Common myeloid progenitor, CD34-positive (primary cell): ENCODE measurements at regions of chr2 and their contacts with region 1.

Region 1: DNA sequence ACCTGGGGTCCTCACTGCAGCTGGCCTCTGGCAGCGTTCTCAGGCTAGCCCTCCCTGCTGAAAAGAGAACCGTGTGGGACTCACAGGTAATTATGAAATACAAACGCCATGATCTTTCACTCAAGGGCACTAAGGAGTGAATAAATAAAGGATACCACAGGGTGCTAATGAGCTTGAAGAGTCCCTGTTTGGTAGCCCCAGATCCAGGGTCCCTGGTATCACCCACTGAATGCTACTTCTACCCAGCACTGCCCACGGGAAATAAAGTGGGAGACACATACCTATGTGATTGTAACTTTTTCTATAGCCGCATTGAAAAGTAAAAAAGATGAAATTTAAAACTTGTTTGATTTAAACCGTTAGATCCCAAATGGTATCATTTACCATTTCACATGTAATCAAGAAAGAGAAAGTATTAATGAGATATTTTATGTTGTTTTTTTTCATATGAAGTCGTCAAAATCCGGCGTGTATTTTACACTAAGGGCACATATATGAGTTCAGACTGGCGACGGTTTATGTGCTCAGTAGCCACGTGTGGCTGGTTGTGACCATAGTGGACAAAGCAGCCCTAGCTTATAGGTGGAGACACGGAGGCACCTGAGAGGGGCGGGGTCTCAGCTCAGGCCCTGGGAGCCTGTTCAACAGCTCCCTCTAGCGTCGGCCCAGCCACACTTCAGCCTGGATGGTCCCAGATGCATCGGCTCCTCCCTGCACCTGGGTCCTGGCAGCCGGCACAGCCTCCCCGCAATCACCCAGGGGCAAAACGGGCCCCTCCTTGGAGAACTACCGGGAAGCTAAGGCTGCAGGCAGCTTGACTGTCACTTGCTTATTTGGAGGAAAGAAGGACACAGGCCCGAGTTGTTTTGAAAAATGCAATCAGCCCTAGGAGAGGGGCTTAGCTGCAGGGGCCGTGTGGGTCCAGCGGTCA is 39.2 kb downstream of the ODC1 start:
- DNase-seq: peak; percentile 80 to 82 (median 81)
- H3K4me3 ChIP-seq: peak overlapping the region in 5 of 7 experiments; percentile 12 to 61 (median 30)
- H3K27ac ChIP-seq: peak overlapping the region in 1 of 2 experiments; percentile 47
- H3K4me1 ChIP-seq: peaks cover 14 to 63% (median 55%) of the 10 kb centered on the region in 4 experiments
- H3K27me3 ChIP-seq: no peaks in the 10 kb centered on the region

Region 2: GRCh38 chr2:10267551-10268465 is 141.1 kb before region 1 on chr2:
- CTCF ChIA-PET with region 1: interaction called, 46 read pairs
- POLR2A ChIA-PET with region 1: interaction called, 3 read pairs
- DNase-seq: no peak
- H3K4me3 ChIP-seq: no peak overlapping the region
- H3K27ac ChIP-seq: no peak overlapping the region
- H3K4me1 ChIP-seq: peaks cover 0 to 10% (median 8%) of the 10 kb centered on the region in 4 experiments
- H3K27me3 ChIP-seq: no peaks in the 10 kb centered on the region

Region 3: DNA sequence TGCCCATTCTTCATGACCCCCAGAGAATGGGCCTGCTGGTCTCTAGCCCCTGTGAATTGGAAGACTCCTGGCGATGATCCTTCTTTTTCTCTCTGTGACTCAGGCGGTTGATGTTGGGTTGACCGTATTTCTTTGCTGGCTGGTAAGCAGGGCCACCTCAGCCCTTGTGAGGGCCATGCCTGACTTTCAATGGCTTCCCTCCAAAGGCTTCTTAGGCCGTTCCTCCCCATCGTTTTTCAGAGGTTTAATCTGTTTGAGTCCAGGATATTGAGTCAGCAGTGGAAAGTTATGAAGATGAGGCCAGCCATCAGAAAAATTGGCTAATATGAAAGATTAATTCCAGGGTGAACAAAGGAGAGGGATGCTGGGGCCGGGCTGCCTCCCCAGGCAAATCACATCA is 92.6 kb before region 1 on chr2:
- CTCF ChIA-PET with region 1: interaction called, 23 read pairs
- POLR2A ChIA-PET with region 1: no interaction called
- DNase-seq: no peak
- H3K4me3 ChIP-seq: no peak overlapping the region
- H3K27ac ChIP-seq: no peak overlapping the region
- H3K4me1 ChIP-seq: no peaks in the 10 kb centered on the region
- H3K27me3 ChIP-seq: no peaks in the 10 kb centered on the region

Region 4: DNA sequence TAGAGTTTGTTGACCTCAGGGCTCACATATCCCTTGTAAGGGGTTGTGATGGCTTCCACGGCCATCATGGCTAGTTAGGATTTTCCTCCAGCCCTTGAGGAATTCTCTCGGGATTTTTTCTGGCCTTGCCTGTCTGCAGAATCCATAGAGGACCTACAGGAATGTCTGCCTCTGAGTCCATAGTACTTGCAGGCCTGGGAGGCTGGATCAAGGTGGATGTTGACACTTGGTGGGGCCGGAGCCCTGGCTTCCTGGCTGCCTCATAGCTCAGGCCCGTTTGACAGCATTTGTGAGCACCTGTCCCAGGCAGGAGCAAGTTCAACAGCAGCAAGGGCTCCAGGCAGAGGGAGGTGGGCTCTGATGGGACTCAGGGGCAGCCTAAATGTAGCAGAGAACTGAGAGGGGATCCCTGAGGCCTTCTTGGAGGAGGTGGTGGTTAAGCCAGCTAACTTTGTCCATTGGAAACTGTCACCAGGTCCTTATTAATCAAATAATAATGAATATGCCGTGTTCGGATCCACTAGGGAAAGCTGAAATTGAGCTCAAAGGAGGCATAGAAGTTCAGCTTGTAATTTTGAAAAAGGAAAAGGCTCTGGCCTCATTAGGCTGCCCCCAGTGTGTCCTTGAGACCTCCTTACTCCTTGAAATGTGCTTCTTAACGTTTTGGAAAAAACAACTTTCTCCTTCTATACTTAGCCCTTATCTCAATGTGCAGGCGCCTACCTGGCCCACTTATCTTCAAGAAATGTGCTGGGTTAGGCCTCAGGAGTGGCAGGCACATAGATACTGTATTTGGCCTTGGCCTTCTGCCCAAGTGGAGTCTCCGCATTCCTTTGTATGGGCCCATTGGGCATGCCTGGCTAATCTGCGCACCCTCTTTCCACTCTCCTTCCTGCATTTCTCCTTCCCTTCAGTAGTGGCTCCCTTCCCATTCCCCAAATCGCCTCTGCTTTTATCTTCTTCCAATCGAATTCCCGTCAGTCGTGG is 39.4 kb before region 1 on chr2:
- CTCF ChIA-PET with region 1: interaction called, 14 read pairs
- POLR2A ChIA-PET with region 1: no interaction called
- DNase-seq: peak in 2 of 3 donors; percentile 32 to 50
- H3K4me3 ChIP-seq: no peak overlapping the region
- H3K27ac ChIP-seq: peak overlapping the region in 1 of 2 experiments; percentile 34
- H3K4me1 ChIP-seq: peaks cover 0 to 11% (median 4%) of the 10 kb centered on the region in 4 experiments
- H3K27me3 ChIP-seq: no peaks in the 10 kb centered on the region

Region 5: DNA sequence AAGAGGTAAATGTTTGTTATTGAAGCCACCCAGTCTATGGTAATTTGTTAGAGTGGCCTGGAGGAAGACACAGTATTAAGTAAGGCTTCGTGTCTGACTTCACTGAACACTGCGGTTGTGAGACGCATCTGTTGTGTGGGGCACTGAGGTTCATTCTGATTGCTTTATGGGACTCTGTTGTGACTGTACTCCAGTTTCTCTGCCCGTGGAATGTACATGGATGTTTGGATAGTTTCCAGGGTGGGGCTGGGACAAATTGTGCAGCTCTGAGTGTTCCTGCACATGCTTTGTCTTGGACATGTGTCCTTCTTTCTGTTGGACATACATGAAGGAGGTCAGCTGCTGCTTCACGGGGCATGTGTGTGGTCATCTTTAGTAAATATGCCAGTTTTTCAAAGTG is 19.3 kb before region 1 on chr2:
- CTCF ChIA-PET with region 1: interaction called, 94 read pairs
- POLR2A ChIA-PET with region 1: no interaction called
- DNase-seq: no peak
- H3K4me3 ChIP-seq: no peak overlapping the region
- H3K27ac ChIP-seq: no peak overlapping the region
- H3K4me1 ChIP-seq: peaks cover 2 to 65% (median 54%) of the 10 kb centered on the region in 4 experiments
- H3K27me3 ChIP-seq: no peaks in the 10 kb centered on the region

Region 6: DNA sequence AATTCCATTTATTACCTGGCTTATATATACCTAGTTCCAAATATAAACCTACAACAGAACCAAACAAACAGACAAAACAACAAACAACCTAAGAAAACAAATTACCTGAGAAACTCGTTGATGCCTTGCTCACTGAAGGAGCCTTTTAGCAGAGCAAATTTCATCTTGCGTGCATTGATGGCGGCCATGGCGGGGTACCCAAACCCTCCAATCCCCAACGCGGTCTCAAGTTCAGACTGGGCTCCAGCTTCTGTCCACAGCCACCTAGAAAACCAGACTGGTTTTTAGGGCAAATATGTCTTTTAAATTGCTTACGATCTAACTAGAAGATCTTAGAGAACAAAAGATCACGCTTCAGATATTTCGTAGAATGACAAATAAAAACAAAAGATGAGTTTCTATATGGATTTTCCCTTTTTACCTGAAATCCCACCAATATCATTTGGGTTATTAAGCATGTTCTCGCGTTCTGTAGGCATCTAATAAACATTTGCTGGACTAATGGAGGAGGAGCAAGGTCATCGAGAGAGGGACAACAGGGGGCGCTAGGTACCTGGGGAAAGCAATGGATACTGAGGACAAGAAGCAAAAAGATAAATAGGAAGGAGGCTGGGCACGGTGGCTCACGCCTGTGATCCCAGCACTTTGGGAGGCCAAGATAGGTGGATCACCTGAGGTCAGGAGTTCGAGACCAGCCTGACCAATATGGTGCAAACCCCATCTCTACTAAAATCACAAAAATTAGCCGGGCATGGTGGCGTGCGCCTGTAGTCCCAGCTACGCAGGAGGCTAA is 378.5 kb after region 1 on chr2:
- CTCF ChIA-PET with region 1: no interaction called
- POLR2A ChIA-PET with region 1: no interaction called
- DNase-seq: peak; percentile 16 to 36 (median 32)
- H3K4me3 ChIP-seq: no peak overlapping the region
- H3K27ac ChIP-seq: no peak overlapping the region
- H3K4me1 ChIP-seq: no peaks in the 10 kb centered on the region
- H3K27me3 ChIP-seq: no peaks in the 10 kb centered on the region